ENCODE measurements at regions of chr10 and their contacts with region 1.

Region 1: GRCh38 chr10:95693668-95694534 is at the start of gene TCTN3:
- DNase-seq: peak; percentile 97
- ATAC-seq: peak; percentile 98
- H3K4me3 Mint-ChIP-seq: peak within 1 kb of the TSS; percentile 98
- H3K27ac Mint-ChIP-seq: peak within 1 kb of the TSS; percentile 93
- H3K4me1 Mint-ChIP-seq: peaks cover 38% of the 10 kb centered on the region
- H3K27me3 Mint-ChIP-seq: peaks cover 2% of the 10 kb centered on the region
- CTCF ChIP-seq: peak; percentile 98
- total RNA-seq, gene TCTN3: 17.6 to 20.5 TPM

Region 2: GRCh38 chr10:95616446-95616845 is 77.5 kb before region 1 on chr10:
- CTCF ChIA-PET with region 1: no interaction called
- POLR2A ChIA-PET with region 1: no interaction called
- intact Hi-C with region 1: no loop called
- DNase-seq: no peak
- ATAC-seq: no peak
- H3K4me3 Mint-ChIP-seq: no peak overlapping the region
- H3K27ac Mint-ChIP-seq: no peak overlapping the region
- H3K4me1 Mint-ChIP-seq: no peaks in the 10 kb centered on the region
- H3K27me3 Mint-ChIP-seq: no peaks in the 10 kb centered on the region
- CTCF ChIP-seq: no peak

Region 3: DNA sequence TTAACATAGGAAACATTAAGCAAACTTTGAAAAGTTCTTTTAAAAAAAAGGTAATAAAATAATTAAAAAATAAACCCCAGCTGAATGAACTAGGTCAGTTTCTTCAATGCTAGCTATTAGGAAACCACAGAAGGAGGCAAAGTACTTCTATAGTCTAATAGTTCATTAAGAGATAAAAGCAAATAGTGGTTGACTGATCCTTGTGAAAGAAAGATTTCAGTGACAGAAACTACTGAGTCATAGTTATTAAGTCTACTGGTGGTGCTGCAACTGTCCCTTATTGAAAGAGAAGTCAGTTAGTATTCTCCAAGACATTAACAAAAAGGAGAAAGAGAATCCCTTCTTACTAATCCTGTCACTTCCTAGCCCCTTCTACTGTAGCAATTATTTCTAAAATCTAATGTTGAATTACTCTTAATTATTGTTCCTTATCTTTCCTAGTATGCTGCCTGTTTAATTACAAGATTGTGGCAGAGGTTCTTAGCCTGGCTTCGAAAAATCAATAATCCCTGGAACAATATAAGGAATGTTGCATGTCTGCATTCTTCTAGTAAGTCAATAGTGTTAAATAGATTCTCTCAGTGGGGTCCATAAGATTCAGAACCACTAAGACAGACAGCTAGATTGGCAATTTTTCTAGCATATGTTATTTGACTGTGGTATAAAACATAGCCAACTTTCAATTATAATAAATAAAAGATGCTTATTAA is 18.3 kb before region 1 on chr10:
- CTCF ChIA-PET with region 1: interaction called, 22 read pairs
- POLR2A ChIA-PET with region 1: interaction called, 3 read pairs
- intact Hi-C with region 1: no loop called
- DNase-seq: no peak
- ATAC-seq: no peak
- H3K4me3 Mint-ChIP-seq: no peak overlapping the region
- H3K27ac Mint-ChIP-seq: no peak overlapping the region
- H3K4me1 Mint-ChIP-seq: no peaks in the 10 kb centered on the region
- H3K27me3 Mint-ChIP-seq: no peaks in the 10 kb centered on the region
- CTCF ChIP-seq: no peak

Region 4: GRCh38 chr10:95728526-95728925 is 34.6 kb after region 1 on chr10:
- CTCF ChIA-PET with region 1: no interaction called
- POLR2A ChIA-PET with region 1: no interaction called
- intact Hi-C with region 1: no loop called
- DNase-seq: no peak
- ATAC-seq: no peak
- H3K4me3 Mint-ChIP-seq: no peak overlapping the region
- H3K27ac Mint-ChIP-seq: no peak overlapping the region
- H3K4me1 Mint-ChIP-seq: no peaks in the 10 kb centered on the region
- H3K27me3 Mint-ChIP-seq: peaks cover 15% of the 10 kb centered on the region
- CTCF ChIP-seq: no peak

Region 5: GRCh38 chr10:95741807-95742467 is 48.0 kb after region 1 on chr10:
- CTCF ChIA-PET with region 1: interaction called, 13 read pairs
- POLR2A ChIA-PET with region 1: no interaction called
- intact Hi-C with region 1: no loop called
- DNase-seq: peak; percentile 6
- ATAC-seq: peak; percentile 24
- H3K4me3 Mint-ChIP-seq: no peak overlapping the region
- H3K27ac Mint-ChIP-seq: no peak overlapping the region
- H3K4me1 Mint-ChIP-seq: no peaks in the 10 kb centered on the region
- H3K27me3 Mint-ChIP-seq: peaks cover 8% of the 10 kb centered on the region
- CTCF ChIP-seq: no peak

Region 6: GRCh38 chr10:95832216-95833041 is 138.5 kb after region 1 on chr10:
- CTCF ChIA-PET with region 1: interaction called, 262 read pairs
- POLR2A ChIA-PET with region 1: interaction called, 3 read pairs
- intact Hi-C with region 1: no loop called
- DNase-seq: peak; percentile 69
- ATAC-seq: peak; percentile 87
- H3K4me3 Mint-ChIP-seq: peak overlapping the region; percentile 70
- H3K27ac Mint-ChIP-seq: peak overlapping the region; percentile 85
- H3K4me1 Mint-ChIP-seq: peaks cover 21% of the 10 kb centered on the region
- H3K27me3 Mint-ChIP-seq: no peaks in the 10 kb centered on the region
- CTCF ChIP-seq: no peak

Region 7: DNA sequence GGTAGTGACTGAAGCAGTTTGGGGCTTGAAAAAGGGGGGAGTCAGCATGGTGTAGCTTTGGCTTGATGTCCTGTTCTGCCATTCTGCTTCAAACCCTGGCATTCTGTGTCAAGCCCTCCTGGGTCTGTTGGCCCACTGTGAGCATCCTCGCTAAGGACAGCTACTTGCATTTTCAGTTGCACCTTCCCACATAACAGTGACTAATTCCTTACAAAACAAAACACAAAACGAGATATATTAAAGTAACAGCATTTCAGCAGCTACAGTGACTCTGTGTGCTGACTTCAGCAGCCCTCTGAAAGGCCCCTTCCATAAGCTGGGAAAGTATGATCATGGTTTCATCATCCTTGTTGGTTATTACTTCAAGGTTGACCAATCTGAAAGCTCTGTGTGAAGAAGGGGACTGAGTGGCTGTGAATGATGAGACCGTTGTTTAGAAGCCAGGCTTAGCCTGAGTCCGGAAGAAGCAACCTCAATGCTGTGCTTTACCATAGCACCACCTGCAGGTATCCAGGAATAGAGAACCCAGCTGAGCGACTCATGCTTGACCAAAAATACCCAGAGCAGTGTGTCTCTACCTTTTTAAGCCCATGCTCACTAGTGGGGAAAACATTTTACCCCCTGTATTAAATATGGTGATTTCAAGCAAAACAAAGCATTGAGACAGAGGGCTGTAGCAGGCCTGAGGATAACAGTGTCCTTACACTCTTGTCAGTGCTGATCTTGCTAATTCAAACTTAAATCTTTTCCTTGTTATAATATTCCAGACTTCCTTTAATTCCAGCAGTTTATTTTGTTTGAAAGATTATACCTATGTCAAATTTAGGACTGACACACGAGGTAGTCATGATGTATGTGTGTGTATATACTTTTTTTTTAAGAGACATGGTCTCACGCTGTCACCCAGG is 171.3 kb after region 1 on chr10:
- CTCF ChIA-PET with region 1: interaction called, 75 read pairs
- POLR2A ChIA-PET with region 1: no interaction called
- intact Hi-C with region 1: loop called (anchors 1 kb)
- DNase-seq: peak; percentile 56
- ATAC-seq: peak; percentile 98
- H3K4me3 Mint-ChIP-seq: no peak overlapping the region
- H3K27ac Mint-ChIP-seq: peak overlapping the region; percentile 45
- H3K4me1 Mint-ChIP-seq: peaks cover 11% of the 10 kb centered on the region
- H3K27me3 Mint-ChIP-seq: no peaks in the 10 kb centered on the region
- CTCF ChIP-seq: peak; percentile 58

Region 8: DNA sequence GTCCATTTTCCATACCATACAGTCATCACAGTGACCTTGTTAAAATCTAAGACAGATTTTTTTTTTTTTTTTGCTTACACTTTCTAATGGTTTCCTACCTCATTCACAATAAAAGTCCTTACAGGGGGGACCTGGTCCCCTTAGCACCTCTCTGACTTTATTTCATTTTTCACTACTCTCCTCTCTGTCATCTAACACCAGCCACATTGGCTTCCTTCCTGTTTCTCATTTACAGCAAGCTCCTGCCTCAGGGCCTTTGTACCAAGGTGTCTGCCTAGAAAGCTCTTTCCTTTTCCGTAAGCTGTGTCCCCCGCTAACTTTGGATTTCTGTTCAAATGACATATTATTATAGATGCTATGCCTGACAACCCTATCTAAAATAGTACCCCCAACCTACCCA is 241.5 kb after region 1 on chr10:
- CTCF ChIA-PET with region 1: no interaction called
- POLR2A ChIA-PET with region 1: no interaction called
- intact Hi-C with region 1: no loop called
- DNase-seq: no peak
- ATAC-seq: no peak
- H3K4me3 Mint-ChIP-seq: no peak overlapping the region
- H3K27ac Mint-ChIP-seq: no peak overlapping the region
- H3K4me1 Mint-ChIP-seq: no peaks in the 10 kb centered on the region
- H3K27me3 Mint-ChIP-seq: peaks cover 4% of the 10 kb centered on the region
- CTCF ChIP-seq: no peak

Measured in activated CD8-positive, alpha-beta T cell treated with anti-CD3 and anti-CD28 coated beads for 36 hours (primary cell).